CD4-positive, alpha-beta T cell (primary cell): ENCODE measurements at regions of chr11 and their contacts with region 1.

Region 1: GRCh38 chr11:8225589-8226036 is 38.1 kb downstream of the LMO1 start:
- DNase-seq: peak; percentile 44 to 76 (median 58)
- ATAC-seq: peak; percentile 37
- H3K4me3 ChIP-seq: no peak overlapping the region
- H3K4me3 Mint-ChIP-seq: no peak overlapping the region
- H3K27ac ChIP-seq: no peak overlapping the region
- H3K27ac Mint-ChIP-seq: no peak overlapping the region
- H3K4me1 ChIP-seq: no peaks in the 10 kb centered on the region
- H3K4me1 Mint-ChIP-seq: no peaks in the 10 kb centered on the region
- H3K27me3 ChIP-seq: no peaks in the 10 kb centered on the region
- H3K27me3 Mint-ChIP-seq: peaks cover 4% of the 10 kb centered on the region
- CTCF ChIP-seq: peak; percentile 91

Region 2: DNA sequence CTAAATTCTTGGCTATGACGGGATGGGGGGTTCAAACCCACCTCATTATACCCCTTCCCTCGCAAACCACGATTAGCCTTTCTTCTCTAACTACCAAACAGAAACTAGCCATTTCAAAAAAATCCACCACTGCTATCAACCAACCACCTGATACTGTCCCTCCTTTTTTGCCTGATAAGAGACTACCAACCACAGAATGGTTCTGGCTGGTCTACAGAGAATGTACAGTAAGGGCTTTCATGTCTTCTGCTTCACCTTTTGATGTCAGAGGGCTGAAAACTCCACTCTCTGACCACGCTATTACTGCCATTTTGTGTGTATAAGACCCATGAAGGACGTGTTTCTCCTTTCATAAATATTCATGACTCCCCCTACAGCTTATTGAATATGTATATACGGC is 75.9 kb before region 1 on chr11:
- CTCF ChIA-PET with region 1: no interaction called
- POLR2A ChIA-PET with region 1: no interaction called
- intact Hi-C with region 1: loop called in 1 of 2 experiments (anchors 2 kb)
- DNase-seq: no peak
- ATAC-seq: no peak
- H3K4me3 ChIP-seq: no peak overlapping the region
- H3K4me3 Mint-ChIP-seq: no peak overlapping the region
- H3K27ac ChIP-seq: no peak overlapping the region
- H3K27ac Mint-ChIP-seq: no peak overlapping the region
- H3K4me1 ChIP-seq: no peaks in the 10 kb centered on the region
- H3K4me1 Mint-ChIP-seq: no peaks in the 10 kb centered on the region
- H3K27me3 ChIP-seq: no peaks in the 10 kb centered on the region
- H3K27me3 Mint-ChIP-seq: no peaks in the 10 kb centered on the region
- CTCF ChIP-seq: no peak

Region 3: DNA sequence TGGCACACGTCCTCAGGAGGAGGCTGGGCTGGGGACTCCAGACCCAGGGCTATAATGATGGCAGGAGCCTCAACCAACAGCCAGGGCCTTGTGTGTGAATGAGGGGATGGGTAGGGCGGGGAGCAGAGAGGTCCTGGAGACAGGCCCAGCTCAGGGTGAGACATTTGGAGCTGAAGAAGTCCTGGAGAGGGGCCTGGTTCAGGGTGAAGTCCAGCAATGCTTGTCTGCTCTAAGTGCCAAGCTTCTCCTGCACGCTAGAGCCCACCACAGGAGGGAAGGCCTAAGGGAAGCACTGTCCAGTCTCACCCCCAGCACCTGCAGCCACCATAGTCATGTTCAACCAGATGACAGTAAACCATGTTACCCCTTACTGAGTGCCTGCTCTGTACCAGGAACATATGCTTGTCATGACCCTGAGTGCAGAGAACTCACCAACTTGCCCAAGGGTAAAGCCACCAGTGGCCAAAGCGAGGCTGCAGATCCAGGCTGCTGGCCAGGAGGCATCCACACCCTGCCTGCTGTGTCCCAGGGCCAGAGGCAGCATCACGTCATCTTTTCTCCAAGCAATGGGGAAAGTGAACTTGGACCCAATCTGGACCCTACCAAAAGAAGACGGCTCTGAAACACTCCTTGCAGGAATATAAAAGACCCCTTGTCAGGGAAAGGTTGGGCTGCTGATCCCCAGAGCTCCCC is 14.1 kb after region 1 on chr11:
- CTCF ChIA-PET with region 1: no interaction called
- POLR2A ChIA-PET with region 1: no interaction called
- intact Hi-C with region 1: no loop called
- DNase-seq: no peak
- ATAC-seq: no peak
- H3K4me3 ChIP-seq: no peak overlapping the region
- H3K4me3 Mint-ChIP-seq: no peak overlapping the region
- H3K27ac ChIP-seq: no peak overlapping the region
- H3K27ac Mint-ChIP-seq: no peak overlapping the region
- H3K4me1 ChIP-seq: no peaks in the 10 kb centered on the region
- H3K4me1 Mint-ChIP-seq: no peaks in the 10 kb centered on the region
- H3K27me3 ChIP-seq: no peaks in the 10 kb centered on the region
- H3K27me3 Mint-ChIP-seq: no peaks in the 10 kb centered on the region
- CTCF ChIP-seq: no peak

Region 4: GRCh38 chr11:8263769-8264410 is 38.3 kb after region 1 on chr11 and contains the start of gene LMO1:
- CTCF ChIA-PET with region 1: interaction called, 3 read pairs
- POLR2A ChIA-PET with region 1: no interaction called
- intact Hi-C with region 1: loop called (anchors 1 kb)
- DNase-seq: peak; percentile 54 to 79 (median 66)
- ATAC-seq: peak; percentile 77
- H3K4me3 ChIP-seq: peak within 1 kb of the TSS; percentile 24
- H3K4me3 Mint-ChIP-seq: peak within 1 kb of the TSS; percentile 84
- H3K27ac ChIP-seq: no peak within 1 kb of the TSS
- H3K27ac Mint-ChIP-seq: no peak within 1 kb of the TSS
- H3K4me1 ChIP-seq: peaks cover 27% of the 10 kb centered on the region
- H3K4me1 Mint-ChIP-seq: peaks cover 11% of the 10 kb centered on the region
- H3K27me3 ChIP-seq: peaks cover 60 to 78% of the 10 kb centered on the region in 2 experiments
- H3K27me3 Mint-ChIP-seq: peaks cover 81% of the 10 kb centered on the region
- CTCF ChIP-seq: peak; percentile 76
- total RNA-seq, gene LMO1: not detected

Region 5: DNA sequence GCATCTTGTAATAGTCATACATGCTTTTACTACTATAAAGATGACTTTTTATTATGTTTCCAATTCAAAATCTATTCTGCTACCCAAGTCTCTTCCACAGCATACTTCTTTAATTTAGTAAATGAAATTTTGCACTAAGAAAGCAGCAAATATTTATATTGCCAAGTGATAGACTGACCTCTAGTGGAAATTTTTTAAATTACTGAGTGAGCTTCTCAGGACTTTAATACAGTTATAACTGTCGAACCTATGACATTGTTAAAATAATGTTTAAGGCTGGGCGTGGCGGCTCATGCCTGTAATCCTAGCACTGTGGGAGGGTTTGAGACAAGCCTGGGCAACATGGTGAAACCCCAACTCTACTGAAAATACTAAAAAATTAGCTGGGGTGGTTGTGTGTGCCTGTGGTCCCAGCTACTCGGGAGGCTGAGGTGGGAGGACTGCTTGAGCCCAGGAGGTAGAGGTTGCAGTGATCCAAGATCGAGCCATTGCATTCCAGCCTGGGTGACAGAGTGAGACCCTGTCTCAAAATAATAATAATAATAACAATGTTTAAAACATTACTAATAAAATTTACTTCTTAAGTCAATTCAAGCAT is 341.1 kb after region 1 on chr11:
- CTCF ChIA-PET with region 1: no interaction called
- POLR2A ChIA-PET with region 1: no interaction called
- intact Hi-C with region 1: loop called (anchors 1 to 2 kb)
- DNase-seq: peak in 3 of 14 experiments; percentile 39 to 46 (median 46)
- ATAC-seq: no peak
- H3K4me3 ChIP-seq: no peak overlapping the region
- H3K4me3 Mint-ChIP-seq: no peak overlapping the region
- H3K27ac ChIP-seq: no peak overlapping the region
- H3K27ac Mint-ChIP-seq: no peak overlapping the region
- H3K4me1 ChIP-seq: no peaks in the 10 kb centered on the region
- H3K4me1 Mint-ChIP-seq: no peaks in the 10 kb centered on the region
- H3K27me3 ChIP-seq: peaks cover 1 to 9% of the 10 kb centered on the region in 2 experiments
- H3K27me3 Mint-ChIP-seq: peaks cover 56% of the 10 kb centered on the region
- CTCF ChIP-seq: peak; percentile 76

Region 6: GRCh38 chr11:9137293-9138132 is 911.9 kb after region 1 on chr11:
- CTCF ChIA-PET with region 1: no interaction called
- POLR2A ChIA-PET with region 1: no interaction called
- intact Hi-C with region 1: loop called in 1 of 2 experiments (anchors 10 kb)
- DNase-seq: peak; percentile 36 to 78 (median 62)
- ATAC-seq: peak; percentile 94
- H3K4me3 ChIP-seq: no peak overlapping the region
- H3K4me3 Mint-ChIP-seq: peak overlapping the region; percentile 0
- H3K27ac ChIP-seq: no peak overlapping the region
- H3K27ac Mint-ChIP-seq: peak overlapping the region; percentile 28
- H3K4me1 ChIP-seq: peaks cover 20% of the 10 kb centered on the region
- H3K4me1 Mint-ChIP-seq: peaks cover 15% of the 10 kb centered on the region
- H3K27me3 ChIP-seq: no peaks in the 10 kb centered on the region
- H3K27me3 Mint-ChIP-seq: no peaks in the 10 kb centered on the region
- CTCF ChIP-seq: peak; percentile 96